Activated CD4-positive, alpha-beta T cell treated with anti-CD3 and anti-CD28 coated beads for 36 hours (primary cell): ENCODE measurements at regions of chr7 and their contacts with region 1.

Region 1: GRCh38 chr7:139058943-139059342 is 23.1 kb upstream of the ZC3HAV1L start:
- DNase-seq: no peak
- ATAC-seq: peak; percentile 28
- H3K4me3 Mint-ChIP-seq: no peak overlapping the region
- H3K27ac Mint-ChIP-seq: peak overlapping the region; percentile 87
- H3K4me1 Mint-ChIP-seq: peaks cover 70% of the 10 kb centered on the region
- H3K27me3 Mint-ChIP-seq: no peaks in the 10 kb centered on the region

Region 2: DNA sequence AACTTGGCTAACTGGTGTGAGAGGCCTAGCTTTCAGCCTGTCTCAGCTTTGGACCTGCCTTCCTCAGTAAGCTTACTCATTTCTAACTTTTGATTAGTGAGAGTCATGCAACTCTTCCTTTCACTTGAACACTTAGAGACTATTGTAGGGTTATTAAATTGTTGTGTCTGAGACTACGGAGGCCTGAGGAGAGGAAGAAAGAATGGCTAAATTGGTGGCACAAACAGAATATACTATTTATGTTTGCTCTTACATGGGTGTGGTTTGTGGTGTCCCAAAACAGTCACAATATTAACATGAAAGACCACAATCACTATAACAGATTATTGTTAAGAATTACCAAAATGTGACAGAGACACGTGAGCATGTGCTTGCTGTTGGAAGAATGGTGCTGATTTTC is 516.8 kb before region 1 on chr7:
- CTCF ChIA-PET with region 1: no interaction called
- POLR2A ChIA-PET with region 1: no interaction called
- intact Hi-C with region 1: no loop called
- DNase-seq: peak; percentile 14
- ATAC-seq: peak; percentile 83
- H3K4me3 Mint-ChIP-seq: no peak overlapping the region
- H3K27ac Mint-ChIP-seq: peak overlapping the region; percentile 17
- H3K4me1 Mint-ChIP-seq: peaks cover 9% of the 10 kb centered on the region
- H3K27me3 Mint-ChIP-seq: no peaks in the 10 kb centered on the region

Region 3: DNA sequence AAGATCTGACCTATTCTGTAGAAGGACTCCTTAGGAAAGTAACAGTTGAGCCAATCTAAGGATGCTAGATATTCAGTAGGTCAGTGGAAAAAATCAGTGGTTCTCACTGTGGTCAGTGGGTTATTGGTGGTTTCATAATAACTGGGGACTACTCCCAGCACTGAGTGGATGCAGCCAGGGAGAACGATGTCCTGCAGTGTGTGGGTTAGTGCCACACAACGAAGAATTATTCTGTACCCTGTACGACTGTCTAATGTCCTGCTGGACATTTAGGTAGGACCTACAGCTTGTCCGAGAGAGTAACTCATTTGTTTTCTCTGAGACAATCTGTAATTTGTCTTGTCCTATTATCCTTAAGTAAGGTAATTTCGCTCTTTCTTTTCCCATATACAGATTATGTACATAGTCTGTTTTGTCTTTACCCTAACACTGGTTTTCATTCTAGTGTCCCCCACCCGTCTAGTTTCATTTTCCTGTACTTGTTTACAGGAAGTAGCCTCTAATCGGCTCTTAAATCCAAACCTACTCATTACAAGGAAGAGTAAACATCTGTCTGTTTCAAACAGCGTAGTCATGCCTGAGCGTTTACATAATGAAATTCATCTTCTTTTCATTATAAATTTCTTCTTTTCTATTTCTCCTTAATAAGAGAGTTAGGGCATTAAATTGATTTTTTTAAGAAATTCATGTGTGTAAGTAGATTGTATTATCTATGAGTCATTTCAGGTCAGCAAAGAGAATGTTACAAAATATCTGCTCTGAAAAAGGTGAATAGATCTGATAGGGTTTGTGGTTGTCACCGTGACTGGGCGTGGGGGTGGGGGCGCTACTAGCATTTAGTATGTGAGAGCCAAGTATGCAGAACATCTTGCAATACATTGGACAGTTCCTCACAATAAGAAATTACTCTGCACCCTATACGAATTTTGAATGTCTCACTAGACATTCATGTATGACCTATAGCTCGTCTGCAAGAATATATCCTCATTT is 14.8 kb before region 1 on chr7:
- CTCF ChIA-PET with region 1: interaction called, 4 read pairs
- POLR2A ChIA-PET with region 1: no interaction called
- intact Hi-C with region 1: loop called in 1 of 2 experiments (anchors 2 kb)
- DNase-seq: peak; percentile 83
- ATAC-seq: peak; percentile 50
- H3K4me3 Mint-ChIP-seq: no peak overlapping the region
- H3K27ac Mint-ChIP-seq: peak overlapping the region; percentile 53
- H3K4me1 Mint-ChIP-seq: peaks cover 64% of the 10 kb centered on the region
- H3K27me3 Mint-ChIP-seq: no peaks in the 10 kb centered on the region

Region 4: DNA sequence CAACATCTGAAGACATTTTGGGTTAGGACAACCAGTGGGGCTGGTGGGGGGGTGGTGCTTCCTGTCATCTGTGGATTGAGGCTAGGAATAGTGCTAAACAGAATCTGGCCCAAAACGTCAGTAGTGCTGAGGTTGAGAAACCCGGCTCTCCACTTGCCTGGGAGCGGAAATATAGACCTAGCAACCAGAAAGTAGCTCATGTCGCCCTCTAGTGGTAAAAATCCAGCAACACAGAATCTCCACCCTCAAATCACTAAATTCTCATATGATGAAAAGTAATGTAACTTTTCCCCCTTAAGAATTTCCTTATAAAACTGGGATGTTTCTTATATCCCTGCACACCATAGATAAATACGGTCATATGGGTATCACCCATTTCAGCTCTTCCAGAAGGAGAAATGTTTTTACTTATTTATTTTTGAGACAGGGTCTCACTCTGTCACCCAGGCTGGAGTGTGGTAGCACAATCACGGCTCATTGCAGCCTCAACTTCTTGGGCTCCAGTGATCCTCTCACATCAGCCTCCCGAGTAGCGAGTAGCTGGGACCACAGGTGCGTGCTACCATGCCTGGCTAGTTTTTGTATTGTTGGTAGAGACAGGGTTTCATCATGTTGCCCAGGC is 16.2 kb after region 1 on chr7:
- CTCF ChIA-PET with region 1: interaction called, 36 read pairs
- POLR2A ChIA-PET with region 1: interaction called, 3 read pairs
- intact Hi-C with region 1: no loop called
- DNase-seq: peak; percentile 77
- ATAC-seq: peak; percentile 79
- H3K4me3 Mint-ChIP-seq: peak overlapping the region; percentile 24
- H3K27ac Mint-ChIP-seq: peak overlapping the region; percentile 76
- H3K4me1 Mint-ChIP-seq: peaks cover 70% of the 10 kb centered on the region
- H3K27me3 Mint-ChIP-seq: no peaks in the 10 kb centered on the region

Region 5: DNA sequence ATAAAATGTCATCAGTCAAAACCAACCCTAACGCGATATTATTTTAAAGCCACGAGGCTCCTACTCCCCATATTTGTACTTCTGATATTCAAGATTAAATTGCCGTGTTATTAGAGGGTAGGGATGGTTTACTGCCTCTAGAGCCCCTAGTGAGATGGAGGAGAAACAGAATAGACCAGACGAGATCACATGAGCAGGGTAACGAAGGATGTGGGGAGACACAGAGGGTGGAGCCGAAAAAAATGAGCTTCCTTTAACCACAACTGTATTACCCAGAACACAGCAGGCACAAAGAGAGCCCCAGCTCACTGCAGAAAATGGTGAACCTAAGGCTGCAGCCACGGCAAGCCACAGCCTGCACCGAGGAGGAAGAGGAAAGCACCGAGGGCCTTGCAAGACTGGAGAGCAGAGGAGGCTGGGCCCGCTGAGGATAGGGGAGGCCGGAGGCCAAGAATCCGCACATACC is 36.3 kb after region 1 on chr7:
- CTCF ChIA-PET with region 1: interaction called, 3 read pairs
- POLR2A ChIA-PET with region 1: interaction called, 14 read pairs
- intact Hi-C with region 1: no loop called
- DNase-seq: peak; percentile 80
- ATAC-seq: peak; percentile 88
- H3K4me3 Mint-ChIP-seq: peak overlapping the region; percentile 70
- H3K27ac Mint-ChIP-seq: peak overlapping the region; percentile 92
- H3K4me1 Mint-ChIP-seq: peaks cover 89% of the 10 kb centered on the region
- H3K27me3 Mint-ChIP-seq: no peaks in the 10 kb centered on the region

Region 6: DNA sequence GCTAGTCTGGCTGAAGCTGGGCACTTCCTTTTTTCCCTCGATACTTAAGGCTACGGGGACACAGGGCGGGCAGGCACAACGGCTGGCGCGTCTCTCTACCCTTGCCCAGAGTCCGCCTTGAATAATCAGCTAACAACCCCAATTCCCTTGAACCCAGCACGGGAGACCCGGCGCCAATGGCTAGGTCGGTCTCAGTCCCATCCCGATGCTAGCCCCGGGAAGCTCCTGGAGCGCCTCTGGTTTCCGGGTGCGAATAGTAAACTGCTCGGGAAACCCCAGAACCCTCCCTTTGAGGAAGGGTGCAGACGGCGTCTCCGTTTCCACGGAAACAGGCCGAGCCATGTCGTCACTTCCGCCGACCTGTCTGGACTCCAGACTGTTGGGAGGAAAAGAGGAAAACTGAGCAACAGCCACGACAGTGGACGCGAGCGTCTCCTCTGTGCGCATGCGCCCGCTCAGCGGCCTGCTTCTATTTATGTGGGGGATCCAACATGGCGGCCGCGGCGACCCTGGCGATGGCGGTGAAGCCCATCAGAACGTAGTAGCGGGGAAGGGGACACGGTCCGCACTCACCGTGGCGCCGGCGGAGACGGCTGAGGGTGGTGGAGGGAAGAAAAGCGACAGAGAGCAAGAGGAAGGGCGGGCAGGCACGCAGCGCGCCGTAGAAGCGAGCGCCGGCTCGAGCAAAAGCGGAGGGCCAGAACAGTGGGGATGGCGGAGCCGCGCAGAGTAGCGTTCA is 172.0 kb after region 1 on chr7 and contains the start of gene UBN2:
- CTCF ChIA-PET with region 1: no interaction called
- POLR2A ChIA-PET with region 1: no interaction called
- intact Hi-C with region 1: no loop called
- DNase-seq: peak; percentile 96
- ATAC-seq: peak; percentile 88
- H3K4me3 Mint-ChIP-seq: peak within 1 kb of the TSS; percentile 98
- H3K27ac Mint-ChIP-seq: peak within 1 kb of the TSS; percentile 93
- H3K4me1 Mint-ChIP-seq: peaks cover 20% of the 10 kb centered on the region
- H3K27me3 Mint-ChIP-seq: peaks cover 3% of the 10 kb centered on the region
- total RNA-seq, gene UBN2: 8.3 to 11.8 TPM

Region 7: DNA sequence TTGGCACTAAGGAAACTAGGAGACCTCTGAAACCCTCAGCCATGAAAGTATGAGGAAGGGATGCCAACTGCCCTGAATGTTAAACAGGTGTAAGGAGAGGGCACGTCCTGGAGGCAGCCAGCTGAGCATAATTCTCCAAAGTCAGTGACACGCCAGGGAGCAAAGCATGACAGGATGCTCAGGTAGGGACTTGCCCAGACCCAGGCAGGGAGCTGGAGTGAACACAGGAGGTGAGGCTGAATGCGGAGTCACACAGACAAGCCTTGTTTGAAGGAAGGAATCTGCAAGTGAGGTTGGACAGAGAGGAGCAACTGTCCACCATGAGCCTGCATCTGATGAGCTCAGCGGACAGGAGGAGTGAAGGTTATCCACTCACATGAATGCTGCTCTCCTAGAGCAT is 383.0 kb after region 1 on chr7:
- CTCF ChIA-PET with region 1: no interaction called
- POLR2A ChIA-PET with region 1: no interaction called
- intact Hi-C with region 1: no loop called
- DNase-seq: no peak
- ATAC-seq: no peak
- H3K4me3 Mint-ChIP-seq: no peak overlapping the region
- H3K27ac Mint-ChIP-seq: no peak overlapping the region
- H3K4me1 Mint-ChIP-seq: no peaks in the 10 kb centered on the region
- H3K27me3 Mint-ChIP-seq: no peaks in the 10 kb centered on the region